ENCODE measurements at regions of chr1 and their contacts with region 1.

Region 1: GRCh38 chr1:235791532-235792060 is 75.1 kb downstream of the LYST start:
- DNase-seq: no peak
- ATAC-seq: no peak
- H3K4me3 ChIP-seq: no peak overlapping the region
- H3K4me3 Mint-ChIP-seq: no peak overlapping the region
- H3K27ac ChIP-seq: no peak overlapping the region
- H3K27ac Mint-ChIP-seq: no peak overlapping the region
- H3K4me1 ChIP-seq: no peaks in the 10 kb centered on the region
- H3K4me1 Mint-ChIP-seq: peaks cover 0 to 5% of the 10 kb centered on the region in 2 donors
- H3K27me3 ChIP-seq: no peaks in the 10 kb centered on the region
- H3K27me3 Mint-ChIP-seq: no peaks in the 10 kb centered on the region
- CTCF ChIP-seq: no peak

Region 2: GRCh38 chr1:235843461-235843961 is 51.9 kb after region 1 on chr1:
- intact Hi-C with region 1: loop called (anchors 5 kb)
- DNase-seq: peak in 1 of 2 donors; percentile 58
- ATAC-seq: peak; percentile 85 to 92 (median 89)
- H3K4me3 ChIP-seq: no peak overlapping the region
- H3K4me3 Mint-ChIP-seq: no peak overlapping the region
- H3K27ac ChIP-seq: no peak overlapping the region
- H3K27ac Mint-ChIP-seq: peak overlapping the region in 1 of 2 donors; percentile 84
- H3K4me1 ChIP-seq: peaks cover 22% of the 10 kb centered on the region
- H3K4me1 Mint-ChIP-seq: peaks cover 55 to 80% of the 10 kb centered on the region in 2 donors
- H3K27me3 ChIP-seq: no peaks in the 10 kb centered on the region
- H3K27me3 Mint-ChIP-seq: no peaks in the 10 kb centered on the region
- CTCF ChIP-seq: peak; percentile 54

Region 3: GRCh38 chr1:235902638-235903542 is 111.3 kb after region 1 on chr1:
- intact Hi-C with region 1: no loop called
- DNase-seq: no peak
- ATAC-seq: no peak
- H3K4me3 ChIP-seq: no peak overlapping the region
- H3K4me3 Mint-ChIP-seq: no peak overlapping the region
- H3K27ac ChIP-seq: no peak overlapping the region
- H3K27ac Mint-ChIP-seq: no peak overlapping the region
- H3K4me1 ChIP-seq: peaks cover 21% of the 10 kb centered on the region
- H3K4me1 Mint-ChIP-seq: peaks cover 22 to 29% of the 10 kb centered on the region in 2 donors
- H3K27me3 ChIP-seq: no peaks in the 10 kb centered on the region
- H3K27me3 Mint-ChIP-seq: no peaks in the 10 kb centered on the region
- CTCF ChIP-seq: no peak

Region 4: DNA sequence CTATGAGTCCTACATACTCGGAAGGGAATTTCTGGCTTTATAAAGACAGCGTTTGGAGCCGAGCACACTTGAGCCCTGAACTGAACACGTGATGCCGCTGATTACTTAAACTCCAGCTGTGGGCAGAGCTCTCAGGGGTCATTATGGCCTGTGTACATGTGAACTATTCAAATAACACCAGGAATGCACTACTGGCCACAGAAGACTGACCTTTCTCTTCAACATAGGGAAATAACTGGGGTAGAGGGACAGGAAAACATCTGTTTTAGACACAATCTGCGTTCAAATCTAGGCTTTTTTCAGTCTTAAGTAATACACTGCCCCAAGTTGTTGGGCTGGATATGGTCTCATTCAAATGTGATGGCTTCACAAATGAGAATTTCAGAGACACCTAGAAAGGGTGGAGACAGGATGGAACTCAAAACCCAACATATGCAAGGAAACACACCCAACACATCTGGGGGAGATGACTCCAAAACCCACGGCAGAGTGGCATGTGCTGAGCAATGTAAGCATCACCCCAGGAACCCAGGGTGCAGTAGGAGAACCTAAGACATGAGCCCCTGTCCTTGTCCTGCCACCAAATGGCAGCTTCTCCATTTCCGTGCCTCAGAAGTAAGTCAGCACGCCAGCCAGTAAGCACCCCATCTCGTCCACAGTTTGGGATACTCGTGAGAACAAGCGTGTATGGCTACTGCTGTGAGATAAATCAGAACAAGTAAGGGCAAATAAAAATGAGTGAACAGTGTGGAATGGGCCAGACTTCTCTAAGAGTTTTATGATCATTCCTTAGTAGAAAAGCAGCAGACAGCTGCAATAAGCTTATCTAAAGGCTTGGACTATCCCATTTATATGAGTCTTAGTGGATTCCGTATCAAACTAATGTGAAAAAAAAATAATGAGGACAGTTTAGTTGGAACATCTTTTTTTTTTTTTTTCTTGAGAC is 248.4 kb after region 1 on chr1:
- intact Hi-C with region 1: no loop called
- DNase-seq: no peak
- ATAC-seq: no peak
- H3K4me3 ChIP-seq: no peak overlapping the region
- H3K4me3 Mint-ChIP-seq: no peak overlapping the region
- H3K27ac ChIP-seq: no peak overlapping the region
- H3K27ac Mint-ChIP-seq: no peak overlapping the region
- H3K4me1 ChIP-seq: no peaks in the 10 kb centered on the region
- H3K4me1 Mint-ChIP-seq: no peaks in the 10 kb centered on the region
- H3K27me3 ChIP-seq: no peaks in the 10 kb centered on the region
- H3K27me3 Mint-ChIP-seq: peaks cover 0 to 9% of the 10 kb centered on the region in 2 donors
- CTCF ChIP-seq: no peak